ENCODE measurements at regions of chr1 and their contacts with region 1.

Region 1: DNA sequence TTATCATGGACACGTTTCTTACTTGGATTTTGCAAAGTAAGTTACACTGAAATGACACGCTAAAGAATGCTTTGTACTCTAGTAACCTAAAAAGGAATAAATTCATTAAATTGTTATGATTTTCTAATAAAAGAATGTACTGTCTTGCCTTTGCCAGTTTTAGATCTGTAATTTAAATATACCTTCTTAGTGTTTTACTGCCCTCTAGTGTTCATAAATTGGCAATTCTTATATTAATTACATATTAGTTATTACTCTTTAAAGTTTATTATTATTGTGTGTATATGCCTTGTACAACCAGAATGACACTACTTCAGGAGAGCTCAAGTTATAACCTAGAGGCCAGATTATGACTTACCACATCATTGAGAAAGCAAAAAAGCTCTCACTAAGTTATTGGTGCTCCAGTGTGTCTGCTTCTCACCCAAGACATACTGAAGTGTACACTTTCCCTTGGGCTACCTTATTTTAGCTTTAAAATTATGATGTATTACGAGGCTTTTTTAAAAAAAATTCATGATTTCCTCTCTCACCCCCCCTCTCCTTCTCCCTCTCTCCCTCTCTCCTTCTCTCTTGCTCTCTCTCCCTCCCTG is 169.9 kb downstream of the HS2ST1 start:
- DNase-seq: no peak
- ATAC-seq: no peak
- H3K4me3 Mint-ChIP-seq: no peak overlapping the region
- H3K27ac Mint-ChIP-seq: no peak overlapping the region
- H3K4me1 Mint-ChIP-seq: peaks cover 7% of the 10 kb centered on the region
- H3K27me3 Mint-ChIP-seq: no peaks in the 10 kb centered on the region

Region 2: GRCh38 chr1:86833461-86834215 is 250.7 kb before region 1 on chr1:
- CTCF ChIA-PET with region 1: interaction called, 56 read pairs
- POLR2A ChIA-PET with region 1: no interaction called
- DNase-seq: peak; percentile 68
- ATAC-seq: peak; percentile 78
- H3K4me3 Mint-ChIP-seq: no peak overlapping the region
- H3K27ac Mint-ChIP-seq: no peak overlapping the region
- H3K4me1 Mint-ChIP-seq: peaks cover 5% of the 10 kb centered on the region
- H3K27me3 Mint-ChIP-seq: peaks cover 4% of the 10 kb centered on the region

Region 3: DNA sequence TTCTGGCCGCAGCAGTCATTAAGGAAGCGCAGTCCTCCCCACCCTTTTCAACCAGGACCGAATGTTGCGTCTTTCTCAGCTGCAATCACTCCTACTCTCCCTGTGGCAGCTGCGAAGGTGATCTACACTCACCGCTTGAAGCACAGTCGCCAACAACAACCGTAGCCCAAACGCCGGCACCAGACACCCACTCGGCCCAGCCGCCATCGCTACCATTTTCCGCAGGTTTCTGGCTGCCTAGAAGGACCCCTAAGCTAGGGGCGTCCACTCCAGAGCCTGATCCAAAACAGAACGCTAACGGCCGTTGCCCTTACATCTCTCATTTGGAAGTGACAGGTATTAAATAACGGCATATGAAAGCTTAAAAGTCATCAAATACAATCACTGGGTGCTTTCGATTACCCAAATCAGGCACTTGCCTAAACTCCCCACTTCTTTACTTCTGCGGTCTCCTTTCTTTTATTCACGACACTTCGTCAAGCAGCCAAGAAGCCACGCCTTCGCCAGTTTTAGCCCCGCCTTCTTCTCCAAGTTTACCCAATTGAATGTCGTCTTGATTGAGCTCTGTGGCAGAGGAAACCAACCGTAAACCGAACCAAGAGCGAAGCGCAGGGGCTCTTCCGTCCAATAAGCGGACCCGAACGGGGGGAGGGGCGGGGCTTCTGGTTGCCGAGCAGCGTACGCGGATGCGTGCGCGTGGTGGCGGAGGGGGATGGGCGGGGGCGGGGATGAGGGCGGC is 170.3 kb before region 1 on chr1 and contains the start of gene SELENOF:
- CTCF ChIA-PET with region 1: interaction called, 18 read pairs
- POLR2A ChIA-PET with region 1: interaction called, 9 read pairs
- DNase-seq: peak; percentile 99
- ATAC-seq: peak; percentile 91
- H3K4me3 Mint-ChIP-seq: no peak within 1 kb of the TSS
- H3K27ac Mint-ChIP-seq: no peak within 1 kb of the TSS
- H3K4me1 Mint-ChIP-seq: peaks cover 42% of the 10 kb centered on the region
- H3K27me3 Mint-ChIP-seq: no peaks in the 10 kb centered on the region
- total RNA-seq, gene SELENOF: 137 to 147 TPM

Region 4: GRCh38 chr1:86957221-86957620 is 127.1 kb before region 1 on chr1:
- CTCF ChIA-PET with region 1: interaction called, 15 read pairs
- POLR2A ChIA-PET with region 1: no interaction called
- DNase-seq: no peak
- ATAC-seq: no peak
- H3K4me3 Mint-ChIP-seq: no peak overlapping the region
- H3K27ac Mint-ChIP-seq: no peak overlapping the region
- H3K4me1 Mint-ChIP-seq: no peaks in the 10 kb centered on the region
- H3K27me3 Mint-ChIP-seq: no peaks in the 10 kb centered on the region

Region 5: DNA sequence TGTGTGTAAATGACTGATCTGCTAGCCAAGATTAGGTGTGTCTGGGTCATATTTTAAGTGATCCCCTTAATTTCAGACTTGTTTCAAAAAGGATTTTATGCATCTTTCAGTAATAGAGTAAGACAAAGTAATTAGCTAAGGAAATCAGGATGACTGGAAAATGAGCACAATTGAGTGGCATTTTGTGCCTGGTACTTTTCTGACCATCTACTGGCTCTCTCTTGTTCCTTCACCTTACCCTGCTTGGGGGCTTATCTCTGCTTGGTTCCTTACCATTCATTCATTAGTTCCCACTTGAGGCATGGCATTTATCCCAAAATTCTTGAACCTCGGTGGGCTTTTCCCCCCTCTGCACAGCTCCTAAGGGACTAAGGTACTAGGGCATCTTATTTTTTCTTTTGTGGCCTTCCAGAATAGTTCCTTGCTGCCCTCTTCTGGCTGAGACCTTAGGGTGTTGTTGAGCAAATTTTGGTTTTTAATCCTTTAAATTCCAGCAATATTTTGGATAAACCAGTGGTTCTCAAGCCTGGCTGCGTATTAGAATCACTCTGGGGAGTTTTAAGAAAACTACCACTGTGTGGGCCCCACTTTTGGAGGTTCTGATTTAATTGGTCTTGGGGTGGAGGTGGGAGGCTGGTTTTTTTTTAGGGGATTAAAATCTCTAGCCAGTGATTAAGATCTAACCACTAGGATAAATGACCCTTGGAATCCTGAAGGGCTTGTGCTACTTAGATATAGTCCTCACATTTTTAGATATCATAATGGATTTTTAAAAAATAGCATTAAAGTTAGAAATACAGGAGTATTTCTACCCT is 119.1 kb before region 1 on chr1:
- CTCF ChIA-PET with region 1: interaction called, 11 read pairs
- POLR2A ChIA-PET with region 1: no interaction called
- DNase-seq: peak; percentile 24
- ATAC-seq: no peak
- H3K4me3 Mint-ChIP-seq: no peak overlapping the region
- H3K27ac Mint-ChIP-seq: no peak overlapping the region
- H3K4me1 Mint-ChIP-seq: no peaks in the 10 kb centered on the region
- H3K27me3 Mint-ChIP-seq: no peaks in the 10 kb centered on the region

Region 6: DNA sequence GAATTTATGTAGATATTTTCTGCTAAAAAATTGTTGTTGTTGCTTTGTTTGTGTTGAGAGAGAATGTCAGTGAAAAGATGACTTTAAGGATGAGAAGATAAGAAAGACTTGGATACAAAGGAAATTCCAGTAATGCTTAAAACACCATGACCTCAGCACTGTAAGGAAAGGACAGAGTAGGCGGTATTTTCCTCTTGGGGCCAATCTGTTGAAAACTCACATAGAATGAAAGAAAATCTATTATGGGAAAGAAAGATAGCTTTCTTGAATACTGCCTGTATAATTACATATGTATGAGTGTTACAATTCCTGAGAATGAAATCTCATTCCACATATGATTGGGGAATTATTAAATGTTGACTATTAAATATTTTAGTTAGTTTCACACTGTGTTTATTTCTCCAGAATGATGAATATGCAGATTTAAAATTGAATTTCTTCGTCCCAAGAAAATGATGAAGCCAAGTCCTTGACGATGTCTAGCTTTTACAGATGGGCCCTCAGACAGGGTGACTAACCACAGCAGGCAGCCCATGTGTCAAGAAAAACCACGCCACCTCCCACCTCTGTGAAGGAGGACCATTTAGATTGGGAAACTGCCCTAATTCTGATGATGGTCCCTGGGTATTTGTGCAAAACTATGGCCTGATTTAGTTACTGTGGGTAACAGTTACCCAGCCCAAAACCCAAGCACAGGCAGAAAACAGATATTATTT is 194.6 kb after region 1 on chr1:
- CTCF ChIA-PET with region 1: no interaction called
- POLR2A ChIA-PET with region 1: no interaction called
- DNase-seq: no peak
- ATAC-seq: no peak
- H3K4me3 Mint-ChIP-seq: no peak overlapping the region
- H3K27ac Mint-ChIP-seq: no peak overlapping the region
- H3K4me1 Mint-ChIP-seq: no peaks in the 10 kb centered on the region
- H3K27me3 Mint-ChIP-seq: peaks cover 3% of the 10 kb centered on the region

Measured in activated CD8-positive, alpha-beta T cell treated with anti-CD3 and anti-CD28 coated beads, Interleukin-2, amount 10 ng/mL, durations not matched to agents 7 days and 5 days (primary cell).